ENCODE measurements at regions of chr9 and their contacts with region 1.

Region 1: GRCh38 chr9:36793277-36793676 is 220.6 kb downstream of the MELK start:
- DNase-seq: no peak
- CTCF ChIP-seq: no peak

Region 2: GRCh38 chr9:36803961-36804360 is 10.7 kb after region 1 on chr9:
- CTCF ChIA-PET with region 1: interaction called, 10 read pairs
- POLR2A ChIA-PET with region 1: no interaction called
- DNase-seq: no peak
- CTCF ChIP-seq: no peak

Measured in GM10248 (cell line).